Naive thymus-derived CD4-positive, alpha-beta T cell (primary cell): ENCODE measurements at regions of chr14 and their contacts with region 1.

Region 1: GRCh38 chr14:68506021-68506644 is 286.7 kb downstream of the ZFP36L1 start:
- DNase-seq: peak in 2 of 9 donors; percentile 13 to 14
- ATAC-seq: no peak
- H3K4me3 ChIP-seq: peak overlapping the region; percentile 19
- H3K4me3 Mint-ChIP-seq: peak overlapping the region; percentile 39 to 84 (median 78)
- H3K27ac ChIP-seq: peak overlapping the region; percentile 52
- H3K27ac Mint-ChIP-seq: peak overlapping the region in 8 of 9 donors; percentile 89 to 98 (median 93)
- H3K4me1 ChIP-seq: peaks cover 29 to 66% of the 10 kb centered on the region in 2 donors
- H3K4me1 Mint-ChIP-seq: peaks cover 28 to 93% (median 86%) of the 10 kb centered on the region in 7 donors
- H3K27me3 ChIP-seq: no peaks in the 10 kb centered on the region
- H3K27me3 Mint-ChIP-seq: no peaks in the 10 kb centered on the region

Region 2: DNA sequence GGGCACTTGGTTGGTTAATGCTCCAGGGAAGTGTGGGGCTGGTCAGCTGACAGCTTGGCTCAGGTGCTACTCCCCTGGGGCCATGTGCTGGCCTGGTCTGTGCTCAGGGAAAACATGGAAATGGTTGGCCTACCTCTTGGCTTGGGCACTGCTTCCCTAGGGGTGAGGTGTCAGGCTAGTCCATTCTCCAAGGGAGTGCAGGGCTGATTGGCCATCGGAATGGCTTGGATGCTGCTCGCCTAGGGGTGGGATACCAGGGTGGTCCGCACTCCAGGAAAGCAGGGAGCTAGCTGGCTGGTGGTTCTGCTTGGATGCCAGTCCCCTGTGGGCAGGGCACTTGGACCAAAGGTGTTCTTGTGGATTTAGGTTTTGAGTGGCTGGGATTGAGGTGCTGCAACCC is 440.8 kb before region 1 on chr14:
- CTCF ChIA-PET with region 1: no interaction called
- POLR2A ChIA-PET with region 1: no interaction called
- intact Hi-C with region 1: no loop called
- DNase-seq: no peak
- ATAC-seq: no peak
- H3K4me3 ChIP-seq: no peak overlapping the region
- H3K4me3 Mint-ChIP-seq: no peak overlapping the region
- H3K27ac ChIP-seq: no peak overlapping the region
- H3K27ac Mint-ChIP-seq: no peak overlapping the region
- H3K4me1 ChIP-seq: no peaks in the 10 kb centered on the region
- H3K4me1 Mint-ChIP-seq: peaks cover 0 to 7% (median 0%) of the 10 kb centered on the region in 7 donors
- H3K27me3 ChIP-seq: no peaks in the 10 kb centered on the region
- H3K27me3 Mint-ChIP-seq: no peaks in the 10 kb centered on the region

Region 3: GRCh38 chr14:68283378-68284123 is 222.6 kb before region 1 on chr14:
- CTCF ChIA-PET with region 1: interaction called, 7 read pairs
- POLR2A ChIA-PET with region 1: interaction called, 30 read pairs
- intact Hi-C with region 1: loop called in 1 of 2 experiments (anchors 2 kb)
- DNase-seq: peak; percentile 20 to 70 (median 62)
- ATAC-seq: peak; percentile 78
- H3K4me3 ChIP-seq: peak overlapping the region; percentile 14
- H3K4me3 Mint-ChIP-seq: peak overlapping the region; percentile 44 to 86 (median 72)
- H3K27ac ChIP-seq: peak overlapping the region; percentile 74
- H3K27ac Mint-ChIP-seq: peak overlapping the region; percentile 93 to 99 (median 97)
- H3K4me1 ChIP-seq: peaks cover 36 to 70% of the 10 kb centered on the region in 2 donors
- H3K4me1 Mint-ChIP-seq: peaks cover 44 to 96% (median 86%) of the 10 kb centered on the region in 7 donors
- H3K27me3 ChIP-seq: no peaks in the 10 kb centered on the region
- H3K27me3 Mint-ChIP-seq: no peaks in the 10 kb centered on the region

Region 4: DNA sequence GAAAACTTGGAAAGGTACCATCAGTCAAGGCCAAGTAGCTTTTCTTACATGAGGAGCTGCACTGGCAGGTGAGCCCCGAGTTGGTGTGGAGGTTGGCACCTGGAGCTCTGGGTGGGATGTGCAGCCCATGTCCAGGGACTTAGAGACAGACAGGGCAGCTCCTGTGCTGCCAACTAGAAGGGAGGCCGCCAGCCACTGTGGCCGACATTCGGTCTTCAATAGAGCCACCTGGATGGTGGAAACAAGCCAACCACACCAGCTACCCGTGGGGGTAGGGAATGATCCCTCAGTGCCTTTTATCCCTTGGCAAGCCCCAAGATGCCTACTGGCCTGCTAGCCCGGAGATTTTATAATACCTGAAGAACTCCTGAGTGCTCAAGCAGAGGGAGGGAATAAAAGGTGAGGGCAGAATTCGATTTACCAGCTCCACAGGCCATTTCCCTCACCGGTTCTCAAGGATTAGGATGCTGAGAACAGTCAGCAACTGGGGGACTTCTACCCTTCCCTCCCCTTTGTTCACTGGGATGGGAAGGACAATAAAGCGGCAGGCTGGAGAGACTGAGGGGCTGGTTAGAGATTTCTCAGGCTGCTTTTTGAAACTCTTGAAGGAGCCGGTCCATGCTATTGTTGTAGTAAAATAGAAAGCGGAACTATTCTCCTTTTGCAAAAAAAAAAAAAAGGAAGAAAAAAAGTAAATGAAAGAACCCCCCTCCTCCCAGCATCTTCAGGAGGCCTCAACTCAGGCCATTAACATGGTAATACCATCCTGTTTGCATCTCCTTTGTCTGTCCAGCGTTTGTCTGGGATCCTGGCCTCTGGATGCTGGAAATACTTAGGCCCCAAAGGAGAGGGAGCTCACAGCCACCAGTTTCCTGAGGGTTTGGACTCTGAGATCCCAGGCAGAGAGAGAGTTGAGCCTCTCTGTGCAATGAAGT is 34.8 kb before region 1 on chr14:
- CTCF ChIA-PET with region 1: no interaction called
- POLR2A ChIA-PET with region 1: interaction called, 6 read pairs
- intact Hi-C with region 1: loop called in 1 of 2 experiments (anchors 5 kb)
- DNase-seq: no peak
- ATAC-seq: no peak
- H3K4me3 ChIP-seq: no peak overlapping the region
- H3K4me3 Mint-ChIP-seq: no peak overlapping the region
- H3K27ac ChIP-seq: no peak overlapping the region
- H3K27ac Mint-ChIP-seq: peak overlapping the region in 2 of 9 donors; percentile 20 to 32
- H3K4me1 ChIP-seq: peaks cover 0 to 3% of the 10 kb centered on the region in 2 donors
- H3K4me1 Mint-ChIP-seq: peaks cover 10 to 28% (median 14%) of the 10 kb centered on the region in 7 donors
- H3K27me3 ChIP-seq: no peaks in the 10 kb centered on the region
- H3K27me3 Mint-ChIP-seq: peaks cover 0 to 4% (median 0%) of the 10 kb centered on the region in 5 donors

Region 5: GRCh38 chr14:68487805-68488590 is 18.1 kb before region 1 on chr14:
- CTCF ChIA-PET with region 1: interaction called, 5 read pairs
- POLR2A ChIA-PET with region 1: interaction called, 41 read pairs
- intact Hi-C with region 1: loop called in 1 of 2 experiments (anchors 1 kb)
- DNase-seq: no peak
- ATAC-seq: no peak
- H3K4me3 ChIP-seq: no peak overlapping the region
- H3K4me3 Mint-ChIP-seq: no peak overlapping the region
- H3K27ac ChIP-seq: no peak overlapping the region
- H3K27ac Mint-ChIP-seq: peak overlapping the region in 2 of 9 donors; percentile 61 to 64
- H3K4me1 ChIP-seq: peaks cover 12 to 27% of the 10 kb centered on the region in 2 donors
- H3K4me1 Mint-ChIP-seq: peaks cover 24 to 64% (median 52%) of the 10 kb centered on the region in 7 donors
- H3K27me3 ChIP-seq: no peaks in the 10 kb centered on the region
- H3K27me3 Mint-ChIP-seq: no peaks in the 10 kb centered on the region

Region 6: DNA sequence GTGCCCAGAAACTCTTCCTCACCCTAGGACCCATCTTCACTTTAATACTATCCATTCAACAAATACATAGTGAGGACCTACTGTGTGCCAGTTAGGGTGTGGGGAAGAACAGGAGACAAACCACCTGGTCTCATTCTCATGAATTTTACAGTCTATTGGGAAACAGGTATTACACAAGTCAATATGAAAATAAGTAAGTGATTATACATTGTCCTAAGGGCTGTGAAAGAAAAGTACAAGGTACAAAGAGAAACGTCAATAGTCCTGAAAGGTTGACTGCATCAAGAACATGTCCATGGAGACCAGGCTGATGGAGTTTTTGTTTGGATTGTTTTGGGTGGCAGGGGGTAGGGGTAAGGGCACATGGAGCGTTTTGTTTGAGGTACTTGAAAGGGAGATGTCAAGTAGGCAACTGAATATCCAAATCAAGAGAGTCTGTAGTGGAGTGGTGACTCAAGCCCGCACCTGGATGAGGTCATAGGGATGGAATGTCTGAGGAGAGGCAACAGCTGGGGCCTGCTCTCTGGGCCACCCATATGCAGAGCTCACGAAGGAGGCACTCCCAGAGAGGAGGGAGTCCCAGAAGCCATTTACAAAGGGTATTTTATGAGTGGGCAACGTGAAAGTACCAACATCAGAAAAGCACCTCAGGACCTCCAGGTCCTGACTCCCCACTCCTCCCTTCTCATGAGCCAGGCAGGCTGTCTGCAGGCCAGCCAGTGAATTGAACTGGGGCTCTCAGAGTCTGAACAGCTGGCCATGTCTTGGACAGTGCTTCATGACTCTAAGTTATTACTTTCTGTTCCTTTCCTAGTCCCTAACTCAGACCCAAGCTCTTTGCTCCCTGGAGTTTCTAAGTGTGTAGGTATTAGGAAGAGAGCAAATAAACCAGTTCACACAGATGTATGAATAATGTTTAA is 14.8 kb after region 1 on chr14:
- CTCF ChIA-PET with region 1: interaction called, 10 read pairs
- POLR2A ChIA-PET with region 1: interaction called, 63 read pairs
- intact Hi-C with region 1: loop called in 1 of 2 experiments (anchors 1 kb)
- DNase-seq: no peak
- ATAC-seq: no peak
- H3K4me3 ChIP-seq: no peak overlapping the region
- H3K4me3 Mint-ChIP-seq: no peak overlapping the region
- H3K27ac ChIP-seq: no peak overlapping the region
- H3K27ac Mint-ChIP-seq: peak overlapping the region in 3 of 9 donors; percentile 49 to 69 (median 66)
- H3K4me1 ChIP-seq: peaks cover 0 to 24% of the 10 kb centered on the region in 2 donors
- H3K4me1 Mint-ChIP-seq: peaks cover 5 to 52% (median 37%) of the 10 kb centered on the region in 7 donors
- H3K27me3 ChIP-seq: no peaks in the 10 kb centered on the region
- H3K27me3 Mint-ChIP-seq: no peaks in the 10 kb centered on the region

Region 7: GRCh38 chr14:68616221-68616902 is 110.2 kb after region 1 on chr14:
- CTCF ChIA-PET with region 1: no interaction called
- POLR2A ChIA-PET with region 1: no interaction called
- intact Hi-C with region 1: no loop called
- DNase-seq: peak in 2 of 9 donors; percentile 14 to 17
- ATAC-seq: no peak
- H3K4me3 ChIP-seq: no peak overlapping the region
- H3K4me3 Mint-ChIP-seq: peak overlapping the region in 1 of 10 donors; percentile 12
- H3K27ac ChIP-seq: no peak overlapping the region
- H3K27ac Mint-ChIP-seq: peak overlapping the region in 2 of 9 donors; percentile 38 to 57
- H3K4me1 ChIP-seq: no peaks in the 10 kb centered on the region
- H3K4me1 Mint-ChIP-seq: peaks cover 0 to 6% (median 3%) of the 10 kb centered on the region in 7 donors
- H3K27me3 ChIP-seq: no peaks in the 10 kb centered on the region
- H3K27me3 Mint-ChIP-seq: no peaks in the 10 kb centered on the region

Region 8: DNA sequence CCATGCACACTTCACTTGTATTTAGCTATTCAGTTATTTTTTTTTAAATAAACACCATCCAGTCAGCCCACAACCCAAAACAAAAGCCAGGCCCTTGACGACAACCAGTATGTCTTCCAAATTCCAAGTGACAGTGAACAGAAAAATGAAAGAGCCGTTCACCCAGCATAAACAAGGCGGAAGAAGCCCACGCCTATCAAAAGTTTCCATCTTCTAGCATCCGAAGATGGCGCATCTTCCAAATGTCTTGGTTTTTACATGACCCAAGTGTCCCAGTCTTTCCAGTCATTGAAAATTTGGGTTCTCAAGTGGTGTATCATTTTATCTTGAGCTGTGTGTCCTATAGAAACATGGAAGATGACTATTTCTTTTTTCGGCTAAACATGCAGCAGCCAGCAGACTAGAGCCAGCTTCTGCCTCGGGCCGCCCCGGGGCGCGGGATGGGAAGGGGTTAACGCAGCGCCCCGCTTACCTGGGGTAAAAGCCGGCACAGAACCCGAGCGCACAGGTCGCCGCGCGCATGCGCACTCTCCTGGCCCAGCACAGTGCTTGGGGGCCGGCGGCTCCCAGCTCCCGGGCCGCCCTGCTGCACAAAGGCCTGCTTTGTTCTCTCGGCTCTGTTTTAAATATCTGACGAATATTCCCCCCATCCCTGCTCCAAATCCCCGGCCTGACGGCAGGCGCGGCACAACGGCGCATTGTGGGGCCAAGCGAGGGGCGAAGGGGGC is 121.9 kb after region 1 on chr14:
- CTCF ChIA-PET with region 1: no interaction called
- POLR2A ChIA-PET with region 1: interaction called, 5 read pairs
- intact Hi-C with region 1: loop called in 1 of 2 experiments (anchors 2 kb)
- DNase-seq: peak; percentile 34 to 65 (median 47)
- ATAC-seq: peak; percentile 74
- H3K4me3 ChIP-seq: peak overlapping the region; percentile 50
- H3K4me3 Mint-ChIP-seq: peak overlapping the region; percentile 58 to 90 (median 82)
- H3K27ac ChIP-seq: peak overlapping the region; percentile 45
- H3K27ac Mint-ChIP-seq: peak overlapping the region; percentile 38 to 94 (median 87)
- H3K4me1 ChIP-seq: peaks cover 3 to 12% of the 10 kb centered on the region in 2 donors
- H3K4me1 Mint-ChIP-seq: peaks cover 13 to 25% (median 21%) of the 10 kb centered on the region in 7 donors
- H3K27me3 ChIP-seq: no peaks in the 10 kb centered on the region
- H3K27me3 Mint-ChIP-seq: peaks cover 0 to 30% (median 0%) of the 10 kb centered on the region in 5 donors

Region 9: GRCh38 chr14:68780358-68781160 is 274.4 kb after region 1 on chr14:
- CTCF ChIA-PET with region 1: interaction called, 6 read pairs
- POLR2A ChIA-PET with region 1: interaction called, 149 read pairs
- intact Hi-C with region 1: loop called in 1 of 2 experiments (anchors 1 kb)
- DNase-seq: peak in 5 of 9 donors; percentile 26 to 39 (median 33)
- ATAC-seq: peak; percentile 31
- H3K4me3 ChIP-seq: peak overlapping the region; percentile 57
- H3K4me3 Mint-ChIP-seq: peak overlapping the region; percentile 74 to 87 (median 84)
- H3K27ac ChIP-seq: peak overlapping the region; percentile 65
- H3K27ac Mint-ChIP-seq: peak overlapping the region; percentile 82 to 94 (median 92)
- H3K4me1 ChIP-seq: peaks cover 62 to 68% of the 10 kb centered on the region in 2 donors
- H3K4me1 Mint-ChIP-seq: peaks cover 39 to 90% (median 82%) of the 10 kb centered on the region in 7 donors
- H3K27me3 ChIP-seq: no peaks in the 10 kb centered on the region
- H3K27me3 Mint-ChIP-seq: no peaks in the 10 kb centered on the region